ENCODE measurements at regions of chr1 and their contacts with region 1.

Region 1: GRCh38 chr1:93345633-93346420 is at the start of gene DR1:
- DNase-seq: peak; percentile 88
- H3K4me3 Mint-ChIP-seq: peak within 1 kb of the TSS; percentile 88
- H3K27ac Mint-ChIP-seq: peak within 1 kb of the TSS; percentile 98
- H3K4me1 Mint-ChIP-seq: peaks cover 24% of the 10 kb centered on the region
- H3K27me3 Mint-ChIP-seq: no peaks in the 10 kb centered on the region
- total RNA-seq, gene DR1: 103 and 104 TPM in 2 replicates

Region 2: DNA sequence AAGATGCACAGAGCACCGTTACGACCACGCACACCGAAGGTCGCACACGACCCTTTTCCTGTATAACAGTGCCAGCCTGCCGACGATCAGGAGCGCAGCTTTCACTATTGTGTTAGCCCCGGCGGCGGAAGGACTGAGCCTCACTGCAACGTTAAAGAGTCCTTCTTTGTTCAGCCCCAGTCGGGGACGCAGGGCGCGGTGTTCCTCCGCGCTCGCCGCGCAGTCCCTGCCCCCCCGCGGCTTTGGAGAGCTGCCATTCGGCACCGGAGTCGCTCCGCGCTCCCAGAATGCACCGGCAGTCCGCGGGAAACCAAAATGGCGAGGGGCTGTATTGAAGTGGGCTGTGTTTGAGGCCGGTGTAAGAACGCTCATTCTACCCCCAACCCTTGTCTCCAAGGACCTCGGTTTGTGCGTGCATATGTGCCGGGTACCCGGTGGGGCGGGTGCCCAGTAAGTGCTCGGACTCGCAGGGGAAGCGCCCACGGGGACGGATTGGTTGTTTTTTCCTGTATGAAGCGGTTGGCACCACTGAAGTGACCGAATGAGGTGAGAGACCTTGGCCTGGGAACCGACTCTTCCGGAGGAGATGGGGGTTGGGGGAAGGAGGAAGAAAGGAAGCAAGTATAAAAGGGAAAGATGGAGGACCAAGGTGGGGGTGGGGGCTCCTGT is 266.7 kb before region 1 on chr1 and contains the start of gene MTF2:
- intact Hi-C with region 1: loop called (anchors 2 kb)
- DNase-seq: peak; percentile 93
- H3K4me3 Mint-ChIP-seq: peak within 1 kb of the TSS; percentile 93
- H3K27ac Mint-ChIP-seq: peak within 1 kb of the TSS; percentile 89
- H3K4me1 Mint-ChIP-seq: peaks cover 25% of the 10 kb centered on the region
- H3K27me3 Mint-ChIP-seq: no peaks in the 10 kb centered on the region
- total RNA-seq, gene MTF2: 73.1 and 83.5 TPM in 2 replicates

Region 3: GRCh38 chr1:93304716-93305138 is 41.1 kb before region 1 on chr1:
- intact Hi-C with region 1: loop called (anchors 2 kb)
- DNase-seq: peak; percentile 13
- H3K4me3 Mint-ChIP-seq: no peak overlapping the region
- H3K27ac Mint-ChIP-seq: no peak overlapping the region
- H3K4me1 Mint-ChIP-seq: no peaks in the 10 kb centered on the region
- H3K27me3 Mint-ChIP-seq: no peaks in the 10 kb centered on the region

Region 4: GRCh38 chr1:93708734-93709481 is 363.1 kb after region 1 on chr1:
- intact Hi-C with region 1: loop called (anchors 5 kb)
- DNase-seq: no peak
- H3K4me3 Mint-ChIP-seq: peak overlapping the region; percentile 47
- H3K27ac Mint-ChIP-seq: peak overlapping the region; percentile 74
- H3K4me1 Mint-ChIP-seq: peaks cover 77% of the 10 kb centered on the region
- H3K27me3 Mint-ChIP-seq: no peaks in the 10 kb centered on the region

Measured in activated T-helper 2 cell treated with anti-CD3 and anti-CD28 coated beads, Interferon-gamma antibody, Interleukin-2, Interleukin-4, amounts not matched to agents 10 μg/mL and 5 μg/mL and 100 μg/mL, durations not matched to agents 14 hours and 24 hours and 36 hours (primary cell).